Activated naive CD4-positive, alpha-beta T cell treated with anti-CD3 and anti-CD28 coated beads for 36 hours (primary cell): ENCODE measurements at regions of chr3 and their contacts with region 1.

Region 1: GRCh38 chr3:179071550-179072397 is at the start of gene ZMAT3:
- DNase-seq: peak; percentile 86
- H3K4me3 Mint-ChIP-seq: peak within 1 kb of the TSS; percentile 99
- H3K27ac Mint-ChIP-seq: peak within 1 kb of the TSS; percentile 89
- H3K4me1 Mint-ChIP-seq: peaks cover 42% of the 10 kb centered on the region
- H3K27me3 Mint-ChIP-seq: no peaks in the 10 kb centered on the region
- total RNA-seq, gene ZMAT3: 26.9 to 28.3 TPM

Region 2: GRCh38 chr3:178856804-178857203 is 215.0 kb before region 1 on chr3:
- CTCF ChIA-PET with region 1: no interaction called
- intact Hi-C with region 1: no loop called
- DNase-seq: no peak
- H3K4me3 Mint-ChIP-seq: no peak overlapping the region
- H3K27ac Mint-ChIP-seq: no peak overlapping the region
- H3K4me1 Mint-ChIP-seq: no peaks in the 10 kb centered on the region
- H3K27me3 Mint-ChIP-seq: no peaks in the 10 kb centered on the region

Region 3: DNA sequence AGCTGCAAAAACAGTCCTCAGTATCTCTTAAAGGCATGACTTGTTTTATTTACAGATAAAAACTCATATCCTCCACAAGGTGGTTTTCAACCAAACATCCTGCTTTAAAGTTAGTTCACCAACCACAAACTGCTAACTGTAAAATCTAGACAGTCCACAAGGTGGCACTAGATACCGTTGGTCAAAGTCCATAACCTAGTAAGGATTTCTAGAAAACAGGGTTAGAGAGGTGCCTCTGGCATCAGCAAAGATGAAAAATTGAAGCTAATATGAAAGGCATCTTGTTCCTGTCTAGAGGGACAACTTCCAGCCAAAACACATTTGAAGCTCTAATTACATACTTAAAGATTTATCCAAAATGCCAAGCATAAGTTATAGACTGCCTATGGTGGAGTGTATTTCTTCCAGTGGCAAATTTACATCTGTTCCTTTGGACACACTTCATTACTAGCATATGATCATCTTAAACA is 56.2 kb before region 1 on chr3:
- CTCF ChIA-PET with region 1: interaction called, 17 read pairs
- intact Hi-C with region 1: loop called (anchors 1 kb)
- DNase-seq: peak; percentile 81
- H3K4me3 Mint-ChIP-seq: no peak overlapping the region
- H3K27ac Mint-ChIP-seq: no peak overlapping the region
- H3K4me1 Mint-ChIP-seq: peaks cover 35% of the 10 kb centered on the region
- H3K27me3 Mint-ChIP-seq: no peaks in the 10 kb centered on the region

Region 4: DNA sequence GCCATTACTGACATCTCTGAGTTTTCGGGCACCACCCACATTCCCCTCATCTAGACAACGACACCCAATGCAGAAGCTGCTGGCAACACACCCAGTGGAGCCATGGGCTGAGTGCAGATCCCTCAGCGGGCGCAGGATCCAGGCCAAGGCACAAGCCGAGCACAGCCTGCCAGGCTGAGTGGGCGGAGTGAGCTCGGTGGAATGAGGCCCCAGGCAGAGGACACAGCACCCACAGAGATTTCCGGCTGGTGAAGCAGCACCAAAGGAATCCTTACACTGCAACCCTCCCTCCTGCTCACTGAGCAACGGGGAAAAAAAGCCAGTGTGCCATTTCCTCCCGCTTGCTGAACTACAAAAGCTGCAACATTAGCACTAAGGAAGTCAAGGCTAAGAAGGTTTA is 34.4 kb before region 1 on chr3:
- CTCF ChIA-PET with region 1: interaction called, 6 read pairs
- intact Hi-C with region 1: loop called (anchors 1 kb)
- DNase-seq: peak; percentile 82
- H3K4me3 Mint-ChIP-seq: peak overlapping the region; percentile 61
- H3K27ac Mint-ChIP-seq: peak overlapping the region; percentile 77
- H3K4me1 Mint-ChIP-seq: peaks cover 11% of the 10 kb centered on the region
- H3K27me3 Mint-ChIP-seq: no peaks in the 10 kb centered on the region

Region 5: DNA sequence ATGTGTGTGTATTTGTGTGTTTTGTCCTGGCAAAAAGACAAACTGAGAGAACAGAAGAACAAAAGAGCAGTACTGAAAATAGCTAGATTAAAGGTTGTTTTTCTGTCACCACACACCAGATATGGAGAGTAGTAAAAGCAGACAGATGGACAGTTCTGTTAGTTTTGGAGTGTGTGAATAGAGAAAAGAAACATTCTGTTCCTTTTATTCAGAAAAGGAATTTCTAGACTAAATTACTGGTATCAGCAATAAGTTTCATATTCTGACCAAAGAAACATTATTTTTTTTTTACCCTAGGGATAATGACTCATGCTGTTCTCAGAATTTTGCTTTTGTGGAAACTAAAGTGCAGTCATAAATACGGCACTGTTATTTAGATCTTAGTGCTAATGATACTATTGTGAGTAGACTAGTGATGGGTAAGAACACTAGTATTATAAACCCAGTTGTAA is 109.3 kb after region 1 on chr3:
- CTCF ChIA-PET with region 1: no interaction called
- intact Hi-C with region 1: loop called (anchors 2 kb)
- DNase-seq: no peak
- H3K4me3 Mint-ChIP-seq: no peak overlapping the region
- H3K27ac Mint-ChIP-seq: no peak overlapping the region
- H3K4me1 Mint-ChIP-seq: peaks cover 47% of the 10 kb centered on the region
- H3K27me3 Mint-ChIP-seq: no peaks in the 10 kb centered on the region

Region 6: DNA sequence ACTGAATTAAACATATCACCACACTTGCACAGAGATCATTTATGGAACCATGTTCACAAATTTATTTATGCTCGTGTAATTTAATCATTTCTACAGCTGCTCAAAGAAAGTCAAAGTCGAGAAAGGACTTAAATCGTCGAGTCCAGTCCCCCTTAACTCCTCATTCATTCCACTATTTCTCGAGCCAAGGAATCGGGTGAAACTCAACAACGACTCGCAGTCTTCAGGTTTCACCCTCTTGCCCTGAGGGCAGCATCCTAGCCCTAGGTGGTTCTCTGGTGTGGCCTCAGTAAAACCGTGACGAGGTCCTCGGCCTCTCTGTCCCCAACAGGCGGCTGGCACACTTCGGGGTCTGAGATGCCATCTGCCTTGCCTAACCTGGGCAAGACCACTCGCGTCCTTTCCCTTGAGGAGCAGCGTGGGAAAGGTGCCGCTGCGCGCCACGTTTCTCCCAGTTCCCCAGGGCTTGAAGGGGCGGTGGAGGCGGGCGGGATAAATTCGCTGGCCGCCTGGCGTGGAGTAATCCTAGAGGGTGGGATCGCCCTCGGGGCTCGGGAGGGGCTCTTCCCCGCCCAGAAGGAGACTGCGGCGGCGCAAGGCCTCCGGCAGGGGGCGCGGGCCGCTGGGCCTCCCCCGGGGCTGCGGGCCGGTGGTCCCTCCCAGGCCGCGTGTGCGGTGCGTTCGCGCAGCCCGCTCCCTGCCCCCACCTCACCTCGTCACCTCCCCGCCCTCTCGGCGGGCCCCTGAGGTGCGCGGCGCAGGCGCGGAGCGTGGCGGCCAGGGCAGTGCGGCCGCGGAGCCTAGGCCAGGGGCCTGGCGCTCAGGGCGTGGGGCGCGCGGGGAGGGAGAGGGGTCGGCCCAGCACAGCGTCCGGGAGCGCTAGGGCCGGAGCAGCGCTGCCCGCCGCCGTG is 250.8 kb after region 1 on chr3 and contains the start of gene ZNF639:
- CTCF ChIA-PET with region 1: interaction called, 44 read pairs
- intact Hi-C with region 1: loop called (anchors 1 kb)
- DNase-seq: peak; percentile 78
- H3K4me3 Mint-ChIP-seq: peak within 1 kb of the TSS; percentile 89
- H3K27ac Mint-ChIP-seq: peak within 1 kb of the TSS; percentile 93
- H3K4me1 Mint-ChIP-seq: peaks cover 26% of the 10 kb centered on the region
- H3K27me3 Mint-ChIP-seq: no peaks in the 10 kb centered on the region
- total RNA-seq, gene ZNF639: 23.3 to 26.0 TPM

Region 7: DNA sequence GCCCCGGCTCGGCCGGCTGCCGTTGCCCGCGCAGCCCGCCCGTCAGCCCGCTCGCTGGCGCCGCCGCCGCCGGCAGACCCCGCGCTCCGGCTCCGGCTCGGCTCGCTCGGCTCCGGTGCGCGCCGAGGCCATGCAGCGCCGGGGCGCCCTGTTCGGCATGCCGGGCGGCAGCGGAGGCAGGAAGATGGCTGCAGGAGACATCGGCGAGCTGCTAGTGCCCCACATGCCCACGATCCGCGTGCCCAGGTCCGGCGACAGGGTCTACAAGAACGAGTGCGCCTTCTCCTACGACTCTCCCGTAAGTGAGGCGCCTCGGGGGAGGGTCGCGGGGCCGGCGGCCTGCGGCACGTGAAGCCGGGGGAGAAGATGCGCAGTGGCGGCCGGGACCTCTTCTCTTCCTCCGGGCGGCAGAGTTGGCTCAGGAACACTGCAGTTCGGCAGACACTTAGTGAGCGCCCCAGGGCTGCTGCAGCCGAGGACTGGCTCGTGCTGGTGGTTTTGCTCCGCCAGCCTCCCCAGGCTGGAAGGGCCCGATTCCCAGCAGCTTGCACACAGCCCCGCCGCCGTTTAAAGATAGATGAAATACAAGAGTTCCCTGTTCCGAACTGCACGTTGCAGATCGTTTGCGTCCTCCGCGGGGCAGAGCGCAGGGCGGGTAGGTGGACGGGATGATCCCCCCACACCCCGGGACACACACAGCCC is 581.5 kb after region 1 on chr3:
- CTCF ChIA-PET with region 1: no interaction called
- intact Hi-C with region 1: loop called (anchors 5 kb)
- DNase-seq: peak; percentile 72
- H3K4me3 Mint-ChIP-seq: peak overlapping the region; percentile 85
- H3K27ac Mint-ChIP-seq: peak overlapping the region; percentile 67
- H3K4me1 Mint-ChIP-seq: peaks cover 17% of the 10 kb centered on the region
- H3K27me3 Mint-ChIP-seq: peaks cover 8% of the 10 kb centered on the region